Activated B cell treated with CpG ODN at 0.5 μM for 24 hours (primary cell): ENCODE measurements at regions of chr3 and their contacts with region 1.

Region 1: GRCh38 chr3:111594205-111594604 is 941 bp downstream of the ZBED2 start:
- DNase-seq: no peak
- ATAC-seq: peak; percentile 81
- H3K4me3 Mint-ChIP-seq: peak overlapping the region; percentile 71
- H3K27ac Mint-ChIP-seq: peak overlapping the region; percentile 90
- H3K4me1 Mint-ChIP-seq: peaks cover 65% of the 10 kb centered on the region
- H3K27me3 Mint-ChIP-seq: no peaks in the 10 kb centered on the region
- CTCF ChIP-seq: no peak

Region 2: GRCh38 chr3:111292117-111292516 is 302.1 kb before region 1 on chr3:
- CTCF ChIA-PET with region 1: no interaction called
- POLR2A ChIA-PET with region 1: no interaction called
- intact Hi-C with region 1: no loop called
- DNase-seq: no peak
- ATAC-seq: no peak
- H3K4me3 Mint-ChIP-seq: no peak overlapping the region
- H3K27ac Mint-ChIP-seq: no peak overlapping the region
- H3K4me1 Mint-ChIP-seq: no peaks in the 10 kb centered on the region
- H3K27me3 Mint-ChIP-seq: no peaks in the 10 kb centered on the region
- CTCF ChIP-seq: no peak

Region 3: GRCh38 chr3:111547631-111548030 is 46.6 kb before region 1 on chr3:
- CTCF ChIA-PET with region 1: no interaction called
- POLR2A ChIA-PET with region 1: interaction called, 5 read pairs
- intact Hi-C with region 1: loop called (anchors 2 kb)
- DNase-seq: no peak
- ATAC-seq: peak; percentile 68
- H3K4me3 Mint-ChIP-seq: no peak overlapping the region
- H3K27ac Mint-ChIP-seq: no peak overlapping the region
- H3K4me1 Mint-ChIP-seq: peaks cover 13% of the 10 kb centered on the region
- H3K27me3 Mint-ChIP-seq: no peaks in the 10 kb centered on the region
- CTCF ChIP-seq: no peak

Region 4: GRCh38 chr3:111610189-111610588 is 16.0 kb after region 1 on chr3:
- CTCF ChIA-PET with region 1: interaction called, 3 read pairs
- POLR2A ChIA-PET with region 1: interaction called, 25 read pairs
- intact Hi-C with region 1: loop called (anchors 1 kb)
- DNase-seq: no peak
- ATAC-seq: peak; percentile 80
- H3K4me3 Mint-ChIP-seq: peak overlapping the region; percentile 58
- H3K27ac Mint-ChIP-seq: peak overlapping the region; percentile 83
- H3K4me1 Mint-ChIP-seq: peaks cover 43% of the 10 kb centered on the region
- H3K27me3 Mint-ChIP-seq: no peaks in the 10 kb centered on the region
- CTCF ChIP-seq: no peak

Region 5: DNA sequence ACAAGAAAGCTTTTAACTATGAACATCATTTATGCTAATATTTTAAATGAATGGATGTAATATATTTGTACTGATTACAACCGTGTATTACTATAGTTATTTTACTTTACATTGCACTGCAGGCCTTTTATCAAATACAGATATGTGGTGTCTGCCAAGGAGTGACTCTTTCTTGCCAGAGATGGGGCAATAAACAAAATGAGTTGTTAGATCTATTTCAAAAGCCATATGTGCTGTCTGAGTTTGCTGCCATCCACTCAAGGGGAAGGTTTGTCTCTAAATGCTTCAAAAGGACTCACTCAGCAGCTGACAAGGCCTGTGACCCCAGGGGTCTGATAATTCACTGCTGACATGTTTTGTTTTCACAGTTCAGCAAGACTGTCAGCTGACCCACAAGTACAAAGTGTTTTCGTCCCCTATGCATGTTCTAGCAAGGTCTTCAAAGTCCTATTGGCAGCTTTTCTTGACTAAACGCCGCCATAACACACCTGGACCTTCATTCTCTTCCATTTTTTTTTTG is 42.2 kb after region 1 on chr3:
- CTCF ChIA-PET with region 1: no interaction called
- POLR2A ChIA-PET with region 1: no interaction called
- intact Hi-C with region 1: no loop called
- DNase-seq: no peak
- ATAC-seq: no peak
- H3K4me3 Mint-ChIP-seq: no peak overlapping the region
- H3K27ac Mint-ChIP-seq: no peak overlapping the region
- H3K4me1 Mint-ChIP-seq: no peaks in the 10 kb centered on the region
- H3K27me3 Mint-ChIP-seq: no peaks in the 10 kb centered on the region
- CTCF ChIP-seq: no peak